HEK293T (cell line): ENCODE measurements at regions of chr5 and their contacts with region 1.

Region 1: DNA sequence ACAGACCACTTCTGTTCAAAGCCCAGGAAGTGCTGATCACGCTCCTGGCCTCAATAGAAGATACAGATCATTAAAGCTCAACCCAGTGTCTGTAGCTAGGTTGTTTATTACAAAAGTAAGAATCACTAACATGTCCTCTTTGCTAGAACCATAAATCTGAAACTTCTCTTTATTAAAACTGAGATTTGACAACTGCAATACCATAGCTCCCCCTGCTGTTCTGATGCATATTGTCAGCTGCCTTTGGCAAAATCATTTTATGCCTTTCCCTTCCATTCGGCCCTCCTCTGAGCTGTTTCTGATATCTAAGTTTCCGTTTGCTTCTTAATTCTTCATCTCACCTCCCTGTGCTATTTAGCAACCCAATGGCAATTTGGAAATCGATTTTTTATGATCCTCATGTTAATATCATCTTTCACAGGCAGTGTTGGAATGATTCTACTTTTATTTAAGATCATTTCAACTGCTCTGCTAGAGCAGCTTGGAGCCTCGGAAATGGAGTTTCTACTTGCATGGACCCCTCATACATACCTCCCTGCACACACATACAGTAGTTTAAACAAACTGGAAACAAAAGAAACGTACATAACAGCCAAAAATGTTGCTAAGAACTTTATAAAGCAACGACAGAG is 998.8 kb downstream of the MAT2B start:
- DNase-seq: peak; percentile 61

Region 2: GRCh38 chr5:163564321-163564938 is 939.8 kb before region 1 on chr5:
- CTCF ChIA-PET with region 1: interaction called, 12 read pairs
- POLR2A ChIA-PET with region 1: no interaction called
- DNase-seq: peak; percentile 50

Region 3: GRCh38 chr5:164013077-164013670 is 491.1 kb before region 1 on chr5:
- CTCF ChIA-PET with region 1: interaction called, 20 read pairs
- POLR2A ChIA-PET with region 1: no interaction called
- DNase-seq: peak; percentile 60